GM10248 (cell line): ENCODE measurements at regions of chr2 and their contacts with region 1.

Region 1: GRCh38 chr2:36355151-36355889 is at the start of gene CRIM1:
- DNase-seq: peak; percentile 72
- CTCF ChIP-seq: no peak

Region 2: DNA sequence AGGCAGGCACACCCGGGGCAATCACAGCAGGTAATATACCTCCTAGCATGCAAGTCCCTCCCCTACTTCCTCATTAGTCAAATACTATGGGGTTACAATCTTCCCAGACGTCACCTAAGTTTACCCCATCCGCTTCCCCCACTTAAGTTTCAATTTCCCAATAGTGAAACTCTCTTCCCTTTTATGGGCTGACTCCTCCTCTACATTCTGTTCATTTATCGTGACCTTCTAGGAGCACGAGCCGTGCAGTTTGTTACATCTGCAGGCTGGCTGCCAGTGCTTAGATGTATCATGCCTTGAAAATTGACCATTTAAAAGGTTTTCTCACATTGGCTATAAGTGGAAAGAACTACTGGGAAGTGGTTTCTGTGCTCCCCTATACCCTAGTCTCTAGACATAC is 1357.5 kb before region 1 on chr2:
- CTCF ChIA-PET with region 1: no interaction called
- POLR2A ChIA-PET with region 1: no interaction called
- DNase-seq: no peak
- CTCF ChIP-seq: no peak

Region 3: DNA sequence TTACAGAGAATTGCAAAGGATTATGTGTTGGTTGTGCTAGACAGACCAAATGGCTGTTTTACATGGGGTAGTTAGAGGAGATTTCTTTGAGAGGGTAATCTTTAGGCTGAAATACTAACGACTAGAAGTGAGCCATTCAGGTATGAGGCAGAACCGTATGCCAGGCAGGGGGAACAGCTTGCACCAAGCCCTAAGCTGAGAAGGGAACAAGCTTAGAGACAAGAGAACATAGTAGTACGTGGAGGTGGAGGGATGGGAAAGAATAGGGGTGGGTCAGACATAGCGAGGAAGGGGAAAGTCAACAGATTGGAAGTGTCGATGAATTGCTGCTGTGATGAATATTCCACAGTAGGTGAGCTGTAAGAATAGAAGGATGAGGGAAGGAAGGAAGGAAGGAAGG is 19.7 kb before region 1 on chr2:
- CTCF ChIA-PET with region 1: interaction called, 17 read pairs
- POLR2A ChIA-PET with region 1: no interaction called
- DNase-seq: no peak
- CTCF ChIP-seq: no peak

Region 4: GRCh38 chr2:36507408-36507812 is 152.1 kb after region 1 on chr2:
- CTCF ChIA-PET with region 1: interaction called, 14 read pairs
- POLR2A ChIA-PET with region 1: no interaction called
- DNase-seq: peak; percentile 58
- CTCF ChIP-seq: peak; percentile 85

Region 5: DNA sequence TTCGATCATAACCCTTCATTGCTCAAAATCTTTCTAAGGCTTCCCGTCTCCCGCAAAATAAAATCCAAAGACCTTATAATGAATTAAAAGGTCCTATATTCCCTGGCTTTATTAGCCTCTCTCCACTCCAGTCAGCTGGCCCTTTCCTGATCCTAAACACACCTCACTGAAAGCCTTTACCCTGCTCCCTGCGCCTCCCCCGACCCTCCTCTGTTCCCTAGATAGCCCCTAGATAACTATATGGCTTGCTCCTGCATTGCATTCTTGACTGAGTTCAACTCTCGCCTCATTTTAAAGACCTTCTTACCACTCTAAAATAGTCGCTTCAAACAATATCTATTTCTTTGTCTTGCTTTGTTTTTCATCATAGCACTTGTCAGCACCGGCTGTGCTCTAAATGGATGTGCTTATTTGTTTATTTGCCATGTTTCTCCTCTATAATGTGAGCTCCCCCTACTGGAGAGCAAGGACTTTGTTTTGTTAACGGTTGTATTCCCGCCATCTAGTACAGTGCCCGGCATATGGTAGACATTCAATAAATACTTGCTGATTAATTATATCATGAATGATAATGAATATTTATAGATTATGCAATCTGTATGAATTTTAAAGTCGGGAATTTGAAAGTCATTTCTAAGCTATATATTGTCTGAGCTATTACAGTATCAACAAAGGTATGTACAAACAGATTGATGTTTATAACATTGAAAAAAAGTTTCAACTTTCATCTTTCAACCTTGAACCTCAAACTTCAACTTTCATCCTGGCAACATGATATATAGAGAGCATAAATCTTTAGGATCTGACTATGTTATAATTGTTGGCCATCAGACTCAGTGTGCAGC is 308.8 kb after region 1 on chr2:
- CTCF ChIA-PET with region 1: interaction called, 77 read pairs
- POLR2A ChIA-PET with region 1: no interaction called
- DNase-seq: peak; percentile 49
- CTCF ChIP-seq: peak; percentile 77